Naive thymus-derived CD4-positive, alpha-beta T cell (primary cell): ENCODE measurements at regions of chr22 and their contacts with region 1.

Region 1: DNA sequence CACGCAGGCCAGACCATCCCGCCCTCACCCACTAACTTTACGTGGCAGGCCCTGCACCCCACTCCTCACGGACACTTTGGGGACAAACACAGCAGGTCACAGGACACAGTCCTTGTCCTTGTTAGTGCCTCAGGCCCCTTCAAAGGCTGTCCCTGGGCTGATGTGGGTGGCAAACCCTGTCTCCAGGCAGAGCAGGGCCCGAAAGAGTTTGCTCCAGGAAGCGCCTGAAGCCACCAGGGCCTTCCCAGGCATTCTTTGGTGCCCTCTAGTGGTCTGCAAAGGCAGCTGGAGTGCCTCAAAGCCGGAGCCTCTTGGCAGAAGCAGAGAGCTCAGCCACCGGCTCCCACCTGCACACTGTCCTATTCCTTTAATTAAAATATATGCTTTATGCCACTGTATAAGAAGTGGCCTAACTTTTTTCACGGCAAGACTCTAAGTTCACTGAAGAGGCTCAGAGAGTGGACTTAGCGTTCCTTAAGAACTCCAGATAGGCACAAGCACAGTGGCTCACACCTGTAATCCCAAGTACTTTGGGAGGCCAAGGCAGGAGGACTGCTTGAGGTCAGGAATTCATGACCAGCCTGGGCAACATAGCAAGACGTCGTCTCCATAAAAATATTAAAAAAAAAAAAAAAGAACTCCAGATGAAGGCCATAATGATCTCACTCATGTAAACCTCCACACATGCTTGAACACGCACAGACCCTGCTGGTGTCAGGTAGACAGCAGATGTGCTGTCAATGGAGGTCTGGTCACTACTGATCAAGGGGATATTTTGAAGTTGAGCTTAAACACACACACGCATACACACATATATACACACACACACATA is 11.1 kb downstream of the TXN2 start:
- DNase-seq: peak; percentile 58 to 90 (median 87)
- ATAC-seq: peak; percentile 97
- H3K4me3 ChIP-seq: no peak overlapping the region
- H3K4me3 Mint-ChIP-seq: peak overlapping the region in 2 of 10 donors; percentile 18 to 30
- H3K27ac ChIP-seq: peak overlapping the region; percentile 34
- H3K27ac Mint-ChIP-seq: peak overlapping the region in 7 of 9 donors; percentile 57 to 87 (median 69)
- H3K4me1 ChIP-seq: peaks cover 6 to 18% of the 10 kb centered on the region in 2 donors
- H3K4me1 Mint-ChIP-seq: peaks cover 9 to 32% (median 25%) of the 10 kb centered on the region in 7 donors
- H3K27me3 ChIP-seq: no peaks in the 10 kb centered on the region
- H3K27me3 Mint-ChIP-seq: no peaks in the 10 kb centered on the region

Region 2: GRCh38 chr22:36301384-36301828 is 169.0 kb before region 1 on chr22:
- CTCF ChIA-PET with region 1: interaction called, 119 read pairs
- POLR2A ChIA-PET with region 1: interaction called, 7 read pairs
- intact Hi-C with region 1: loop called (anchors 1 kb)
- DNase-seq: peak; percentile 68 to 86 (median 80)
- ATAC-seq: peak; percentile 94
- H3K4me3 ChIP-seq: no peak overlapping the region
- H3K4me3 Mint-ChIP-seq: peak overlapping the region in 3 of 10 donors; percentile 6 to 40 (median 26)
- H3K27ac ChIP-seq: peak overlapping the region; percentile 15
- H3K27ac Mint-ChIP-seq: peak overlapping the region; percentile 56 to 81 (median 76)
- H3K4me1 ChIP-seq: peaks cover 0 to 3% of the 10 kb centered on the region in 2 donors
- H3K4me1 Mint-ChIP-seq: peaks cover 4 to 14% (median 11%) of the 10 kb centered on the region in 7 donors
- H3K27me3 ChIP-seq: no peaks in the 10 kb centered on the region
- H3K27me3 Mint-ChIP-seq: no peaks in the 10 kb centered on the region

Region 3: DNA sequence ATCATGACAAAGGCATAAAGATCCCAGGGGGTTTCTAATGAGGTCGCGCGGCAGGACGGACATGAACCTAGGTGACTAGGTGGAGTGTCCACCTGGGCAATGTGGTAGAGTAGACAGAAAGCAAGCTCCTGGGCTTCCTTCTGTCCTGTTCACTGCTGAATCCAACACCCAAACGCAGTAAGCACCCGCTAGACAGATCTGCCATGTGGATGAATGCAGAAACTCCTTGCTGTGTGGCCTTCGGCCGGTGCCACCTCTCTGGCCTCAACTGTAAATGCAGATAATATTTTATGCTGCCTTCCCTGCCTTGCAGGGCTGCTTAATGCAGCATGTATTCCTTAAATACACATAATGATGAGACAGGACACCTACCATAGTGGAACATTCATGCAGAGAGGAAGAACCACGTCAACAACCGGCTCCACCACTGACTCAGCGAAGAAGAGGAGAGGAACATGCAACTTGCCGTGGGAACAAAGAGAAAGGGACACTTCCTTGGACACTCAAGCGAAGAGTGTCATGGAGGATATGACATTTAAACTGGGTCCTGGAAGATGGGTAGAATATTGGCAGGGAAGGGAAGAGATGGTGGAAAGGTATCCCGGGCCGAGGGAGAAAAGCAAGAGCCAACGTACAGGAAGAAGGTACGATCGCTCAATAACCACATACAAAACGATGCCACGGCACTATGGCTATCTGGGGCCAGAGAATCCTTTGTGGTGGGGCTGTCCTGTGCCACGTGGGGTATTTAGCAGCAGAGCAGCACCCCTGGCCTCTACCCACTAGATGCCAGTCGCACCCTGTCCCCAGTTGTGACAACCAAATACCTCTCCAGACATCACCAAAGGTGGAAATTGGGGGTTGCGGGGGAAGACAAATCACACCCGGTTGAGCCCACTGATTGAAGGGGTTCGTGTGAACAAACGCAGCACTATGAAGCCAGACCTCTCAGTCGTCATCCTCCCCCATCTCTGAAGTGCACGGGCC is 113.4 kb before region 1 on chr22:
- CTCF ChIA-PET with region 1: interaction called, 15 read pairs
- POLR2A ChIA-PET with region 1: no interaction called
- intact Hi-C with region 1: no loop called
- DNase-seq: peak in 3 of 9 donors; percentile 44 to 64 (median 55)
- ATAC-seq: peak; percentile 52
- H3K4me3 ChIP-seq: peak overlapping the region; percentile 39
- H3K4me3 Mint-ChIP-seq: peak overlapping the region; percentile 75 to 89 (median 83)
- H3K27ac ChIP-seq: peak overlapping the region; percentile 57
- H3K27ac Mint-ChIP-seq: peak overlapping the region; percentile 82 to 98 (median 94)
- H3K4me1 ChIP-seq: peaks cover 94 to 96% of the 10 kb centered on the region in 2 donors
- H3K4me1 Mint-ChIP-seq: peaks cover 69 to 100% (median 94%) of the 10 kb centered on the region in 7 donors
- H3K27me3 ChIP-seq: no peaks in the 10 kb centered on the region
- H3K27me3 Mint-ChIP-seq: no peaks in the 10 kb centered on the region

Region 4: DNA sequence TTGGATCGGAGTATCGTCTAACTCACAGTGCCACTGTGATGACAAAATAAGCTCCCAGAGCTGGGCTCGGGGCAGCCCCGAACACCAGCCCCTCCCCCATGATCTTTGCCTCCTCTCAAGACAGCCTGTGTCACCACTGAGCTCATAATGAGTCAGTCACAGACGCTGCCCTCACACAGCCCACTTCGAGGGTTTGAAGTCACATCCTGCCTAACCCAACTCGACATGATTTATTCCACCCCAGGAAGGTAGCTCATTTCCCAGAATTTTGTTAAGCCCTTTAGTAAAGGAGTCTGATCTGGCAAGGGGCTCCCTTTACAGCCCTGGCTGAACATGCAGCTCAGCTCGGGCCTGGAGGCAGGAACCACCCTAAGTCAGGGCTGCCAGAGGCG is 105.4 kb before region 1 on chr22:
- CTCF ChIA-PET with region 1: interaction called, 7 read pairs
- POLR2A ChIA-PET with region 1: no interaction called
- intact Hi-C with region 1: loop called in 1 of 2 experiments (anchors 1 kb)
- DNase-seq: peak; percentile 55 to 98 (median 83)
- ATAC-seq: peak; percentile 97
- H3K4me3 ChIP-seq: no peak overlapping the region
- H3K4me3 Mint-ChIP-seq: peak overlapping the region; percentile 58 to 88 (median 82)
- H3K27ac ChIP-seq: peak overlapping the region; percentile 93
- H3K27ac Mint-ChIP-seq: peak overlapping the region; percentile 91 to 98 (median 96)
- H3K4me1 ChIP-seq: peaks cover 97 to 98% of the 10 kb centered on the region in 2 donors
- H3K4me1 Mint-ChIP-seq: peaks cover 73 to 100% (median 95%) of the 10 kb centered on the region in 7 donors
- H3K27me3 ChIP-seq: no peaks in the 10 kb centered on the region
- H3K27me3 Mint-ChIP-seq: no peaks in the 10 kb centered on the region

Region 5: DNA sequence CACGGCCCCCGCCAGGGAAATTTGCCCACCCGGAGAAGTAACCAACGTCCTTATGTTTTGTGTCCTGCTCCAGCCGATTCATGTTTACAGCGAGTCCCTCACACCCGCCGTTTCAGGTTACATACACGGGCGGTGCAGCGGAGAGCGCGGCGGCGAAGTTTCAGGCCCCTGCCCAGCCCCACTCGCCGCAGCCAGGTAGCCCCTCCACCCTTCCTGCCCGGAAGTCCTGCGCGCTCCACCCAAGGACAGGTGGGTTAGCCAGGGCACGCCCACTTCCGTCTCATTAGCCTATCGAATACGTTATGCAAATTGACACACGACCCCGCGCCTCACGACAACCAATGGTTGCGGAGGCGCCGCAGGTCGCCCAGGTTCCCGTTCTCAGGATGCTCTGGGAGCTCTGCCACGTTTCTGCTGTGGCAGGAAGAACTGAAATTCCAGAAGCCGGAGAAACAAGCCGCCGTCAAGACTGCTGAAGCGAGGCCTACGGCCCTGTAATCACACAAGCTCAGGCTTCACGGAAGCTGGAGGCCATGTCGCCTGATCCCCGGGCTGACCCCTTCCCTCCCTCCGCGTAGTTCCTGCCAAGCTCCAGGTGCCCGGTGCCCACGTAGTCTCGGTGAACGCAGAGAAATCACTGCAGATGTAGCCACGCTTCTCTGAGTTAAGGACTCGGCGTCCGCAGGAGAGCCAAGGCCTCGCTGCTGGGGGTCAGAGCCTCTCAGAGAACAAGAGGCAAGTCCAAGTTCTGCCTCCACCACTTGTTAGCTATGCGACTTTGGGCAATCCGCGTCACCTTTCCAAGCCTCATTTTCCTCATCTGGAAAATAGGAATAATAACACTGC is 60.2 kb before region 1 on chr22:
- CTCF ChIA-PET with region 1: interaction called, 6 read pairs
- POLR2A ChIA-PET with region 1: interaction called, 5 read pairs
- intact Hi-C with region 1: loop called in 1 of 2 experiments (anchors 1 kb)
- DNase-seq: peak; percentile 46 to 77 (median 70)
- ATAC-seq: peak; percentile 89
- H3K4me3 ChIP-seq: peak overlapping the region; percentile 28
- H3K4me3 Mint-ChIP-seq: peak overlapping the region; percentile 59 to 82 (median 74)
- H3K27ac ChIP-seq: peak overlapping the region; percentile 70
- H3K27ac Mint-ChIP-seq: peak overlapping the region; percentile 69 to 92 (median 87)
- H3K4me1 ChIP-seq: peaks cover 31 to 40% of the 10 kb centered on the region in 2 donors
- H3K4me1 Mint-ChIP-seq: peaks cover 26 to 63% (median 55%) of the 10 kb centered on the region in 7 donors
- H3K27me3 ChIP-seq: no peaks in the 10 kb centered on the region
- H3K27me3 Mint-ChIP-seq: no peaks in the 10 kb centered on the region

Region 6: GRCh38 chr22:36425977-36426523 is 44.3 kb before region 1 on chr22:
- CTCF ChIA-PET with region 1: no interaction called
- POLR2A ChIA-PET with region 1: no interaction called
- intact Hi-C with region 1: no loop called
- DNase-seq: no peak
- ATAC-seq: no peak
- H3K4me3 ChIP-seq: no peak overlapping the region
- H3K4me3 Mint-ChIP-seq: peak overlapping the region in 6 of 10 donors; percentile 4 to 70 (median 54)
- H3K27ac ChIP-seq: no peak overlapping the region
- H3K27ac Mint-ChIP-seq: peak overlapping the region in 8 of 9 donors; percentile 17 to 88 (median 59)
- H3K4me1 ChIP-seq: peaks cover 0 to 11% of the 10 kb centered on the region in 2 donors
- H3K4me1 Mint-ChIP-seq: peaks cover 19 to 39% (median 30%) of the 10 kb centered on the region in 7 donors
- H3K27me3 ChIP-seq: no peaks in the 10 kb centered on the region
- H3K27me3 Mint-ChIP-seq: no peaks in the 10 kb centered on the region

Region 7: DNA sequence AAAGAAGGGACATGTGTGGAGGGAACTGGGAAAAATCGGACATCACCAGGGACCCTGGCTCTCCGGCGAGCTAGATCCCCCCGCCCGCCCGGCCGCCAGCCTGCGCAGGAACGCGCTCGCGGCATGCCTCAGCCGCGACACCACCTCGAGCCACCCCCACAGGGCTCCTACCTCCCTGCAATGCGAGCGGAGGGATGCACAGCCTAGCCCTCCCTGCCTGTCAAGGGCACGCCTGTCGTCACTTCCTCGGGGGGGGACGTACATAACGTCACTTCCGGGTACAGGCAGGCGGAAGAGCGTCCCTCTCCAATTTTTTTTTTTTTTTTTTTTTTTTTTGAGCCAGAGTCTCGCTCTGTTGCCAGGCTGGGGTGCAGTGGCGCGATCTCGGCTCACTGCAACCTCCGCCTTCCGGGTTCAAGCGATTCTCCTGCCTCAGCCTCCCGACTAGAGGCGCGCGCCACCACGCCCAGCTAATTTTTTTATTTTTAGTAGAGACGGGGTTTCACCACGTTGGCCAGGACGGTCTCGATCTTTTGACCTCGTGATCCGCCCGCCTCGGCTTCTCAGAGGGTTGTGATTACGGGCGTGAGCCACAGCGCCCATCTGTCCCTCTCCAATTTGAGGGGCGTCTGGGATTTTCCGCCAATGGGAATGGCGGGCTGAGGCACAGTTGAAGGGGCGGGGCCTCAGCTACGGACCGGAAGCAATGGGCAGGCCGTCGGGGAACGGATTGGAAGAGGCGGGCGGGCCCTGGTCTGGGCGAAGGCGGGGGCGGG is 11.2 kb after region 1 on chr22 and contains the start of gene TXN2:
- CTCF ChIA-PET with region 1: interaction called, 4 read pairs
- POLR2A ChIA-PET with region 1: interaction called, 11 read pairs
- intact Hi-C with region 1: no loop called
- DNase-seq: peak; percentile 91 to 99 (median 98)
- ATAC-seq: peak; percentile 90
- H3K4me3 ChIP-seq: peak within 1 kb of the TSS; percentile 55
- H3K4me3 Mint-ChIP-seq: peak within 1 kb of the TSS; percentile 90 to 100 (median 96)
- H3K27ac ChIP-seq: peak within 1 kb of the TSS; percentile 96
- H3K27ac Mint-ChIP-seq: peak within 1 kb of the TSS; percentile 78 to 99 (median 95)
- H3K4me1 ChIP-seq: peaks cover 8 to 15% of the 10 kb centered on the region in 2 donors
- H3K4me1 Mint-ChIP-seq: peaks cover 15 to 30% (median 18%) of the 10 kb centered on the region in 7 donors
- H3K27me3 ChIP-seq: no peaks in the 10 kb centered on the region
- H3K27me3 Mint-ChIP-seq: peaks cover 0 to 2% (median 0%) of the 10 kb centered on the region in 5 donors
- total RNA-seq, gene TXN2: 35.5 to 69.9 (median 37.7) TPM